Activated T-helper 1 cell treated with anti-CD3 and anti-CD28 coated beads, Interleukin-12 subunit alpha, Interleukin-12 subunit beta, Interleukin-2, Interleukin-4 antibody, amounts not matched to agents 30 ng/mL and 10 ng/mL and 1 ng/mL, durations not matched to agents 14 hours and 24 hours and 36 hours (primary cell): ENCODE measurements at regions of chr14 and their contacts with region 1.

Region 1: DNA sequence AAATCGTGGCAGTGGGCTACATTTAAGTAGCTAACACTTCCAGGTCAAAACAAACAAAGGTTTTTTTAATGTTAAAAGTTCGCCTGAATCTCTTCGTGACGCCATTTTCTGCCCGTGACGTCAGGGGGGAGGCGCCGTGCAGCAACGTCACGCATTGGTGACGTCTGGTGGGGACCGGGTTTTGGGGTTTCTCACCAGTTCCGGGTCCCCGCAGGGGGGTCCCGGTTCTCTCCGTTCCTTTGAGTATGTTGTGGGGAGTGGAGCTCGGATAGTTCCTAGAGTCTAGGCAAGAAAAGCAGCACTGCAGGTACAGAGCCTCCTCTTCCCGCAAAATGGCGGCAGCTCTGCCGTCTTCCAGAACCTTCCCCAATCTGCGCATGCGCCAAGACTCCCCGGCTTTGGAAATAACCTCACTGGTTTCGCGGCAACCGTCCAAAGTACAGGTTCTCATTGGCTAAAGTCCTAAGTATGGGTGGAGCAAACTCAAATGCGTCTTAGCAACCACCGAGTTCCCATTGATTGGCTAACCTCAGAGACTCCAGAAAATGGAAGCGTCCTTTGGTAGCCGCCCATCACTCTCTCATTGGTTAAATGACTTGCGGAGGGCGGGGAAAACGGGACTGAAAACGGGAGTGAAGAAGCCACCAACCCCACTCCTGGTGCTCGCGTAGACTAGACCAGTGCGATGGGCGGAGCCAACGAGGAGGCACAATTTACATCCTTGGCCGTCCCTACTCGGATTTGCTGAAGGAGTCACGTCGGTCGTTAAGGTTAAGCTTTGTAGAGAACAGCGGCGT is at the start of gene RBM23:
- DNase-seq: peak; percentile 99
- H3K4me3 Mint-ChIP-seq: peak within 1 kb of the TSS; percentile 95
- H3K27ac Mint-ChIP-seq: peak within 1 kb of the TSS; percentile 100
- H3K4me1 Mint-ChIP-seq: peaks cover 54% of the 10 kb centered on the region
- H3K27me3 Mint-ChIP-seq: peaks cover 4% of the 10 kb centered on the region
- total RNA-seq, gene RBM23: 86.4 and 90.5 TPM in 2 replicates

Region 2: GRCh38 chr14:22589096-22589839 is 329.7 kb before region 1 on chr14 and contains the start of gene DAD1:
- intact Hi-C with region 1: loop called (anchors 1 kb)
- DNase-seq: peak; percentile 100
- H3K4me3 Mint-ChIP-seq: peak within 1 kb of the TSS; percentile 91
- H3K27ac Mint-ChIP-seq: peak within 1 kb of the TSS; percentile 96
- H3K4me1 Mint-ChIP-seq: peaks cover 55% of the 10 kb centered on the region
- H3K27me3 Mint-ChIP-seq: no peaks in the 10 kb centered on the region
- total RNA-seq, gene DAD1: 228 and 229 TPM in 2 replicates

Region 3: DNA sequence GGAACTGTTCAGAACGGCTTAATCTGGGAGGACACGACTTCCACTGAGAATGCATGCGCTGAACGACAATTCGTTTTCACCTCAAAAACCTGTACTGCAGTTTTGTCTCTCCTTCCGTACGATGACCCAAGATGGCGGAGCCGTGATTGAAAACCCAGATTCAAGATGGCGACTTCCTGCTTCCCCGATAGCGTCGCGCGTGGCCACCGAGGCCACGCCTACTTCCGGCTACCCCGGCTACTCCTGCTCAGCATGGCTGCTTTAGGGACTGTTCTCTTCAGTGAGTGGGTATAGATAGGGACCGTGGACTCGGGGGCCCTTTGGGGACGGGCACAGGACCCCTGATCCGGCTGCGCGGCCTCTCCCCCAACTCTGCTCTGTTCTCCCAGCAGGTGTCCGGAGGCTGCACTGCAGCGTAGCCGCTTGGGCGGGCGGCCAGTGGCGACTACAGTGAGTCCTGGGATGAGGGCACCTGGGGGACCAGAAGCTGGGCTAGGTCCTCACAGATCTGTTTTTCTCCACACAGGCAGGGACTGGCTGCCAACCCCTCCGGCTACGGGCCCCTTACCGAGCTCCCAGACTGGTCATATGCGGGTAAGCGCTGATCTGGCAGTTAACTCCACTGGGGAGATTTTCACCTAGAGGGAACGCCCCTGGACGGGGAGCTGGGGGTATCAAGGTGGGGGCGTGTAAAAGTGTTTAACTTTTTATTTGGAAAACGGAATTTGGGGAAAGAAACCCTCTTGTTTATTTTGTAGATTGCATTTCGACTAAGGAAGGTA is 89.2 kb before region 1 on chr14 and contains the start of gene MRPL52:
- intact Hi-C with region 1: loop called (anchors 1 kb)
- DNase-seq: peak; percentile 81
- H3K4me3 Mint-ChIP-seq: peak within 1 kb of the TSS; percentile 95
- H3K27ac Mint-ChIP-seq: peak within 1 kb of the TSS; percentile 91
- H3K4me1 Mint-ChIP-seq: peaks cover 33% of the 10 kb centered on the region
- H3K27me3 Mint-ChIP-seq: no peaks in the 10 kb centered on the region
- total RNA-seq, gene MRPL52: 187 and 196 TPM in 2 replicates

Region 4: GRCh38 chr14:22886500-22887259 is 32.3 kb before region 1 on chr14:
- intact Hi-C with region 1: loop called (anchors 1 kb)
- DNase-seq: peak; percentile 62
- H3K4me3 Mint-ChIP-seq: peak overlapping the region; percentile 87
- H3K27ac Mint-ChIP-seq: peak overlapping the region; percentile 88
- H3K4me1 Mint-ChIP-seq: peaks cover 31% of the 10 kb centered on the region
- H3K27me3 Mint-ChIP-seq: peaks cover 8% of the 10 kb centered on the region

Region 5: DNA sequence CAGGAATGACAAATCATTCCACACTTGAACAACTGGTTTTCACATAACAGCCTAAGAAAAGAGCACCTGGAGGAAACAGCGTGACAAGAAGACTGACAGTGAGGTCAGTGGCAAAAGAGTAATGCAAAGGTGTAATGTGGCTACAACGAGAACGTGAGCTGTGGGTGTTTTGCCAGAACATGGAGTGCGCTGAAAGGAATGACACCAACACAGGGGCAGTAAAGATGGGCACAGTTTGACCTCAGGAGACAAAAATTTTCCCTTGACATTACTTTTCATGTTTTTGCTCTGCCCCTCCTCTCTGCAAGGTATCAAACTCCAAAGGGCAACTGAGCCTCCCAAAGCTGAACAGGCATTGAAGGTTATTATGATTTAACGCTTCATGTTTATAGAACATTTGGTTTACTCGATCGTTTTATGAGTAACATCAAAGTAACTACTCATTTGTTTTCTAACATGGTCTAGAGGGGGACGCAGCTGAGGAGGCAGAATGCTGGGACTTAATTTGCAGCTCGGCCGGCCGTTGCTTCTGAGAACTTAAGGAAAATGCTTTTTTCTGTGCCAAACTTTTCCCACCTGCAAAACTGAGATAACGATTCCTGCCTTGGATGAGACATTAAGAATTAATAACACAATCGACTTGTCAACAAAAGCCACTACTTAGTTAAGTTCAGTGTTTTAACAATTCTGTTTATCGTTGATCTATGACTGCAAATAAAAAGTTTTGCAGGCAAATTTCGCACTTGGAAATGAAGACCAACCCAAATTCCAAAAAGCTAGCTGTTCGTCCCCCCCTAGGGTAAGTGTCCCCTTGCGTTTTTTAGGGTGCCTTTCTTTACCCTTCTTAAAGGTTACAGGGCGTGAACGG is 36.9 kb after region 1 on chr14:
- intact Hi-C with region 1: loop called (anchors 1 kb)
- DNase-seq: no peak
- H3K4me3 Mint-ChIP-seq: peak overlapping the region; percentile 93
- H3K27ac Mint-ChIP-seq: peak overlapping the region; percentile 86
- H3K4me1 Mint-ChIP-seq: peaks cover 17% of the 10 kb centered on the region
- H3K27me3 Mint-ChIP-seq: peaks cover 3% of the 10 kb centered on the region

Region 6: DNA sequence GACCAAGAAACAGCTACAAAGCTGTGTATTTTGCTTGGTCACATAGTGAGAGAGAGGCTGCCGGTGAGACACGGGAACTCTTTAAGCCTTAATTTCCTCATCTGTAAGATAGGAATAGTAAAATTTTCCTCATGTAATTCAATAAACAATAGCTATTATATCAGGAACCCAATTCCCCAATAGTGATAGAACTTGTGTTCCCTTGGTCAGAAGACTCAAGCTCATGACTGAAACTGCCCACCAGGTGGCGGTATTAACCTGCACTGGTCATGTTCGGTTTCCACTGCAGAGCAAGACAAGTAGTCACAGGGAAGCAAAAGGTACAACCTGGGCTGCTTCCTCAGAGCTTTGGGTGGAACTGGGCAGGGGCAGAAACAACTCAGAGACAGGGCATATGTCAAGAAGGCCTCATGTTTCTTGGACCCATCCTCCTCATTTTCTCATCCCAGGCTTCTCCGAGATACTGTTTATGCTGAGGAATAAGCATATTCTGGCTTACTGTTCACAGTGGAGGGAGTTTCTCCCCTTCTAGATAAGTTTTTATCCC is 67.6 kb after region 1 on chr14:
- intact Hi-C with region 1: no loop called
- DNase-seq: peak; percentile 79
- H3K4me3 Mint-ChIP-seq: no peak overlapping the region
- H3K27ac Mint-ChIP-seq: no peak overlapping the region
- H3K4me1 Mint-ChIP-seq: no peaks in the 10 kb centered on the region
- H3K27me3 Mint-ChIP-seq: peaks cover 3% of the 10 kb centered on the region

Region 7: GRCh38 chr14:23034483-23035302 is 115.7 kb after region 1 on chr14 and contains the start of gene PSMB5:
- intact Hi-C with region 1: loop called (anchors 1 kb)
- DNase-seq: peak; percentile 85
- H3K4me3 Mint-ChIP-seq: peak within 1 kb of the TSS; percentile 98
- H3K27ac Mint-ChIP-seq: peak within 1 kb of the TSS; percentile 98
- H3K4me1 Mint-ChIP-seq: peaks cover 28% of the 10 kb centered on the region
- H3K27me3 Mint-ChIP-seq: peaks cover 2% of the 10 kb centered on the region
- total RNA-seq, gene PSMB5: 144 and 148 TPM in 2 replicates

Region 8: GRCh38 chr14:23307687-23308644 is 389.0 kb after region 1 on chr14:
- intact Hi-C with region 1: no loop called
- DNase-seq: no peak
- H3K4me3 Mint-ChIP-seq: peak overlapping the region; percentile 79
- H3K27ac Mint-ChIP-seq: no peak overlapping the region
- H3K4me1 Mint-ChIP-seq: peaks cover 26% of the 10 kb centered on the region
- H3K27me3 Mint-ChIP-seq: peaks cover 7% of the 10 kb centered on the region